ENCODE measurements at regions of chr4 and their contacts with region 1.

Region 1: GRCh38 chr4:155353923-155354540 is 22.7 kb downstream of the MAP9 start:
- DNase-seq: peak; percentile 49 to 80
- H3K4me3 ChIP-seq: no peak overlapping the region
- H3K4me1 ChIP-seq: no peaks in the 10 kb centered on the region
- H3K27me3 ChIP-seq: no peaks in the 10 kb centered on the region

Region 2: DNA sequence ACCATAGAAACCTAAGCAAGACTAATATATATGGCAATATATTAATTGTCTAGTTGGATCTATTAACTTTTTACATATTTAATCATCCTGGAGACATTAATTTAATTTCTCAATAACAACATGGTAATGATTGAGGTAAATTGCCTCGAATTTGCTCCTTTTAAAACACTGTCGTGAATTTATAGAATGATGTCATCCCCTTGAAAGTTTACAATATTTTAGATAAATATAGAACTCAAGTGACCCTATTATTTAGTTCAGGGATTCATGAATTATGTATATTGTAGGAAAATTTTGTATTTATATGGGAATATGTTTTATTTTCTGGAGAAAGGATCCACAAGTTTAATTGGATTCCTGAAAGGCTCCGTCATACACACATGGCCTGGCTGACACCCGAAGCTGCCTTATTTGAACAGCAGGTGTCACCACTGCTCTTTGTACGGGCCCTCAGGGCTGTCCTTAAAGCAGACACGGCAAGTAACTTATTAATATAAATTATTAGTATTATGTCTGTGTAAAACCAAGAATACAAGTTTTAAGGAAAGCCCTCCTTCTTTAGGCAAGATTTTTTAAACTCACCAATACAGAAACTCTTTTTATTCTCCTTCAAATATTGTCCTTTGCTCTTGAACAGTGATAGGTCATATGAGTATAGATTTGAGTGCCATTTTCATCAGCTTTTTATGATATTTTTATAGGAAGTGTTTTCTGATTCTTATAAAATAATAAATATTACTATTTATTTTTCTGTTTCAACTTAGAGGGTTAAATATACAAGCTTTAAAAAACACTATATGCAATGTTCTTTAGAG is 802.0 kb before region 1 on chr4:
- in situ Hi-C with region 1: loop called (anchors 25 kb)
- DNase-seq: peak; percentile 60 to 76
- H3K4me3 ChIP-seq: no peak overlapping the region
- H3K4me1 ChIP-seq: peaks cover 7% of the 10 kb centered on the region; the same call in 1 of the 2 replicates
- H3K27me3 ChIP-seq: no peaks in the 10 kb centered on the region

Region 3: DNA sequence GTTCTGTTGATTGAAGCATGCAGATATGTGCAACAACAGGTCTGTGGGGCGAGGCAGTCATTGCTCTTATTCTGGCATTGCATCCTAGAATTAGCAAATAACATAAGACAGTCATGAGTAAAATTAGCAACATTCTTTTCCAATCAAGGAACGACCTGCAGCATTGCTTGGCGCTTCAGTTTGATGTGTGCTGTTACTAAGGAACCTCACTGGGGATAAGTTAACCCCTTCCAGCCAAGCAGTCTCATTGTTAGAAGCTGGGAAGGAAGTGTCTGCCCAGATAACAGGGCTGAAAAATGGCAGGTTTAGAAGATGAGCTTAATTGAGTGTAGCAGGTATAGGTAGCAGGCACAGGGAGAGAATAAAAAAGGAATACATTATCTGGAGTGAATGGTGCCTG is 517.5 kb before region 1 on chr4:
- in situ Hi-C with region 1: loop called (anchors 25 kb)
- DNase-seq: no peak
- H3K4me3 ChIP-seq: no peak overlapping the region
- H3K4me1 ChIP-seq: no peaks in the 10 kb centered on the region
- H3K27me3 ChIP-seq: no peaks in the 10 kb centered on the region

Measured in HAP-1 (cell line).